Natural killer cell (primary cell): ENCODE measurements at regions of chr7 and their contacts with region 1.

Region 1: DNA sequence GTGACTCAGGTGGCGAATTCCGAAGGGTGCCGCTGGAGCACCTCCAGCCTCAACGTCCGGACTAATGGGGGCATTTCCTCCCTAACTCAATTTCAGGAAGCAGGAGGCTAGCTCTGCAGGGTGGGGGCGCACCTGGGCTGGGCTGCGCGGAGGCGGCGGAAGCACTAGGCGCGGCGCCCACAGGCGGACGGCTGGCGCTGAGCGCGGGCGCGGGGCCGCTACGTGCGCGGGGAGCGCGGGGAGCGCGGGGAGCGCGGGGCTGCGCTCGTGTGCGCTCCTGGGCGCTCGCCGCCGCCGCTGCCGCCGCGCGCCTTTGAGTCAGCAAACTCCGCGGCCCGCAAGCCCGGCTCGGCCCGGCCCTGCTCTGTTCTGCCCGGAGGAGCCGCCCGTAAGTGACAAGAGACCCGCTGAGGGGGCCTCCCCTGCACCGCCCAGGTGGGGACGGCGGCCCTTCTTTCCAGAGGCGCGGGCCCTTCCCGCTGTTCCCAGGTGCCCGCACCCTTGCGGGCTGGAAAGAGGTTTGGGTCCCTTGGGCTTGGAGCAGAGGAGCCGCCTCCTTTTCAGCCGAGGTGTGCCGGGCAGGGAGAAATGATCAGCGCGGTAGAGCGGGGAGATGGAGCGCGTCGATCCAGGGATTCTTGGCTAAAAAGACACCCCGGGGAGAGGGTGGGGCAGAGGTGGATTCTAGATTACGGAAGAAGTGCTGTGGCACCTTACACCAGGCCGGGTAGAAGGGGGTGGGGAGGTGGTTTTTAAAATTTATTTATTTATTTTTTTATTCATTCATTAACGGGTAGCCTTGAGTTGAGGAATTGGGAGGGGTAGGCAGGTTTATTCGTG is at the start of gene SNX10:
- DNase-seq: peak; percentile 70 to 89
- ATAC-seq: peak; percentile 66 to 83 (median 73)
- H3K4me3 ChIP-seq: peak within 1 kb of the TSS; percentile 98
- H3K4me3 Mint-ChIP-seq: peak within 1 kb of the TSS; percentile 97
- H3K27ac ChIP-seq: peak within 1 kb of the TSS; percentile 94
- H3K27ac Mint-ChIP-seq: peak within 1 kb of the TSS; percentile 97
- H3K4me1 ChIP-seq: peaks cover 42% of the 10 kb centered on the region
- H3K4me1 Mint-ChIP-seq: peaks cover 36 to 46% of the 10 kb centered on the region in 2 donors
- H3K27me3 ChIP-seq: no peaks in the 10 kb centered on the region
- H3K27me3 Mint-ChIP-seq: no peaks in the 10 kb centered on the region
- CTCF ChIP-seq: no peak
- total RNA-seq, gene SNX10: 17.2 to 26.8 (median 21.3) TPM

Region 2: GRCh38 chr7:26090927-26091519 is 200.9 kb before region 1 on chr7:
- intact Hi-C with region 1: loop called (anchors 10 kb)
- DNase-seq: peak in 1 of 2 donors; percentile 72
- ATAC-seq: peak; percentile 60 to 77 (median 63)
- H3K4me3 ChIP-seq: no peak overlapping the region
- H3K4me3 Mint-ChIP-seq: peak overlapping the region; percentile 57
- H3K27ac ChIP-seq: no peak overlapping the region
- H3K27ac Mint-ChIP-seq: no peak overlapping the region
- H3K4me1 ChIP-seq: no peaks in the 10 kb centered on the region
- H3K4me1 Mint-ChIP-seq: peaks cover 7 to 14% of the 10 kb centered on the region in 2 donors
- H3K27me3 ChIP-seq: no peaks in the 10 kb centered on the region
- H3K27me3 Mint-ChIP-seq: peaks cover 0 to 9% of the 10 kb centered on the region in 2 donors
- CTCF ChIP-seq: peak; percentile 61

Region 3: GRCh38 chr7:26278770-26279169 is 13.1 kb before region 1 on chr7:
- intact Hi-C with region 1: no loop called
- DNase-seq: peak in 1 of 2 donors; percentile 58
- ATAC-seq: peak; percentile 61 to 75 (median 71)
- H3K4me3 ChIP-seq: no peak overlapping the region
- H3K4me3 Mint-ChIP-seq: peak overlapping the region; percentile 50
- H3K27ac ChIP-seq: peak overlapping the region; percentile 38
- H3K27ac Mint-ChIP-seq: no peak overlapping the region
- H3K4me1 ChIP-seq: peaks cover 8% of the 10 kb centered on the region
- H3K4me1 Mint-ChIP-seq: peaks cover 7 to 8% of the 10 kb centered on the region in 2 donors
- H3K27me3 ChIP-seq: no peaks in the 10 kb centered on the region
- H3K27me3 Mint-ChIP-seq: no peaks in the 10 kb centered on the region
- CTCF ChIP-seq: peak; percentile 27